Activated T-helper 1 cell treated with anti-CD3 and anti-CD28 coated beads, Interleukin-12 subunit alpha, Interleukin-12 subunit beta, Interleukin-2, Interleukin-4 antibody, amounts not matched to agents 30 ng/mL and 10 ng/mL and 1 ng/mL, durations not matched to agents 14 hours and 24 hours and 36 hours (primary cell): ENCODE measurements at regions of chr16 and their contacts with region 1.

Region 1: GRCh38 chr16:30747799-30748634 is at the start of gene PHKG2:
- DNase-seq: peak; percentile 97
- H3K4me3 Mint-ChIP-seq: peak within 1 kb of the TSS; percentile 93
- H3K27ac Mint-ChIP-seq: peak within 1 kb of the TSS; percentile 83
- H3K4me1 Mint-ChIP-seq: peaks cover 19% of the 10 kb centered on the region
- H3K27me3 Mint-ChIP-seq: no peaks in the 10 kb centered on the region
- total RNA-seq, gene PHKG2: 42.4 and 43.6 TPM in 2 replicates

Region 2: GRCh38 chr16:30551781-30552180 is 196.2 kb before region 1 on chr16:
- intact Hi-C with region 1: loop called (anchors 1 kb)
- DNase-seq: peak; percentile 66
- H3K4me3 Mint-ChIP-seq: peak overlapping the region; percentile 59
- H3K27ac Mint-ChIP-seq: peak overlapping the region; percentile 93
- H3K4me1 Mint-ChIP-seq: peaks cover 56% of the 10 kb centered on the region
- H3K27me3 Mint-ChIP-seq: no peaks in the 10 kb centered on the region

Region 3: GRCh38 chr16:30761928-30762810 is 14.2 kb after region 1 on chr16 and contains the starts of genes CFAP119 and RNF40:
- intact Hi-C with region 1: loop called (anchors 1 kb)
- DNase-seq: peak; percentile 95
- H3K4me3 Mint-ChIP-seq: peak within 1 kb of the TSS; percentile 93
- H3K27ac Mint-ChIP-seq: peak within 1 kb of the TSS; percentile 82
- H3K4me1 Mint-ChIP-seq: peaks cover 28% of the 10 kb centered on the region
- H3K27me3 Mint-ChIP-seq: no peaks in the 10 kb centered on the region
- total RNA-seq, gene CFAP119: 4.4 and 5.6 TPM in 2 replicates
- total RNA-seq, gene RNF40: 98.2 and 98.5 TPM in 2 replicates

Region 4: DNA sequence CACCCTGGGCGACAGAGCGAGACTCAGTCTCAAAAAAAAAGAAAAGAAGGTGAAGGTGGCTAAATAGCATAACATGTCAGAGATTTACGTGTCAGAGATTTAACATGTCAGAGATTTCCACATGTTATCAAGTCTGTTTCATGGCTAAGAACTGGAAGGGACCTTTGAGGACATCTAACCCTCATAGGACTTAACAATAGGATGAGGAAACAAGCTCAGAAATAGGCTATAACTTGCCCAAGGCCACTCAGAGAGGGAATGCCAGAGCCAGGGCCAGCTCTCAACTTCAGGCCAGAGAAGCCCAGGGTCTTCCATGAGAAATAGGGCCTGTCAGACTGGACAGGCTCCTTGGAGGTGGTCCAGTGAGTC is 65.8 kb after region 1 on chr16:
- intact Hi-C with region 1: loop called (anchors 1 kb)
- DNase-seq: no peak
- H3K4me3 Mint-ChIP-seq: peak overlapping the region; percentile 92
- H3K27ac Mint-ChIP-seq: peak overlapping the region; percentile 78
- H3K4me1 Mint-ChIP-seq: peaks cover 15% of the 10 kb centered on the region
- H3K27me3 Mint-ChIP-seq: peaks cover 4% of the 10 kb centered on the region

Region 5: GRCh38 chr16:30893744-30894539 is 145.9 kb after region 1 on chr16 and contains the start of gene BCL7C:
- intact Hi-C with region 1: loop called (anchors 5 kb)
- DNase-seq: peak; percentile 86
- H3K4me3 Mint-ChIP-seq: peak within 1 kb of the TSS; percentile 92
- H3K27ac Mint-ChIP-seq: peak within 1 kb of the TSS; percentile 78
- H3K4me1 Mint-ChIP-seq: peaks cover 39% of the 10 kb centered on the region
- H3K27me3 Mint-ChIP-seq: no peaks in the 10 kb centered on the region
- total RNA-seq, gene BCL7C: 23.1 and 25.3 TPM in 2 replicates